Posterior vena cava (tissue), 2 donors: ENCODE measurements at regions of chr9 and their contacts with region 1.

Region 1: DNA sequence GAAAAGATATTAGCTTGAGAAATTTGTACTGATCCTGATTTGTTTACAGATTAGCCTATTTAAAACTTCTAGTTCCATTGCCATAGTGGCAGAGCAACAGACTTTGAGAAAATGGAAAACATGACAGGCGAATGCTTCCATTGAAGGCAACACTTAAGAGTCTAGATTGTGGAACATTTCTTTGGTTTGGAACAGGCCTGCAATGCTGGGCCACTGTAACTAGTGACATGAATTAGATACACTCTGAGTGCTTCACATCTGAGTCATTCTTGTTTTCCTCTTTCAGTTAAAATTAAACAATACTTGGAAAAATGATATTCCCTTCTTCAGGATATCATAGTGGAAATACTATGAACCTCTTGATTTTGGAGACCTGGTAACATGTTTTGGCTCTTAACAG is 453.6 kb upstream of the TUSC1 start:
- DNase-seq: no peak

Region 2: DNA sequence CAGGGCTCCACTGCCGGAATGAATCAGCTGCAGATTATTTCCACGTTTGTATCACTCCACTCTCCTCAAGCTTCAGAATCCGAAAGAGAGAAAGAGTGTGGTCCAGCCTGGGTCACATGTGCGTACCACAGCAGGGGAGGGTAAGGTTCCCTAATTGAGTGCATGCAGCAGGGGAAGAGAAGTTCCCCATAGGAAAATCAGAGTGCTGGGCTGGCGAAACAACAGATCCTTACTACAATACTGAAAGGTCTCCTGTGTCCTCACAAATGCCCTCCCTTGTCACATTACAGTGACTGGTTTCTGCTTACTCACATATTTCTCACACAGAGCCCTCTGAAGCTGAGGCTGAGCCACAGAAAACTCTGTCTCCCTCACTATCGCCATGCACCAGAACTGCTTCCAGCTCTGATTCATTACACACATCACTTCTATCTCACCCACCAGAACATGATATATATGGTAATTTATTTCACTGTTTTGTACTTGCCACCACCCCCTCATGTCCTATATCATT is 78.5 kb after region 1 on chr9:
- intact Hi-C with region 1: loop called in 1 of 2 experiments (anchors 2 kb)
- DNase-seq: no peak